Activated CD4-positive, alpha-beta memory T cell treated with anti-CD3 and anti-CD28 coated beads, Interleukin-2, amount 10 ng/mL, durations not matched to agents 7 days and 5 days (primary cell): ENCODE measurements at regions of chr12 and their contacts with region 1.

Region 1: DNA sequence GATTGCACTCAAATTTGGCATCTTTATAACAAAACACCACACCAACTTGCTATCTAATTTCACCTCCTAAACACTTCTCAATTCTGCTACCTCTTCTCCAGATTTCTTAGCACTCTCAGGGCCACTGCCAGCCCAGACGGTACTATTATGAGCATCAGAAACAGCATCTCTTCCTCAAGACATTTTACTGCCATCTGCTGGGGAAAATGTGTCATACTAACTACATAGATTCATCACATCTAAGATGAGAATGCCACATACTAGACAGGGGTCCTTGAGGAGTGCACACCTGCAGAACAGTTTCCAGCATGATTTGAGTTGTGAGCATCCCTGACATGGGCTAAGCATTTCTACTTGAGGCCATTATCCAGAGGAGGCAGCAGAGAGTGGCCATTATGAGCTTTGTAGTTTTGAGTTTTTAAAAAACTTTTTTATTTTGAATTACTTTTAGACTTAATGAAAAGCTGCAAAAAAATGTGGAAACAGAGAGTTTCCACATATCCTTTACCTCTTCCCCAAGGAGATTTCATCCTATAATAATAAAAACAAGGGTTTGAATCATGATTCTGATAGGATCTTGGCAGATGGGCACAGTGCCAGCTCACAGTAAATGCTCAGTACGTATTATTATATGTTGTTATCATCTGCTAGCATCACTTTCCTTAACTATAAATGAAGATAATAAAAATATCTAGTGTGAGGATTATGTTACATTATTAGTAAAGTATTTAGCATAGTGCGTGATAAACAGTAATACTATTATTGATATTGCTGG is 15.2 kb upstream of the GRIP1 start:
- DNase-seq: no peak
- H3K4me3 Mint-ChIP-seq: no peak overlapping the region
- H3K27ac Mint-ChIP-seq: no peak overlapping the region
- H3K4me1 Mint-ChIP-seq: no peaks in the 10 kb centered on the region
- H3K27me3 Mint-ChIP-seq: peaks cover 22% of the 10 kb centered on the region

Region 2: GRCh38 chr12:66269757-66270383 is 424.2 kb before region 1 on chr12:
- CTCF ChIA-PET with region 1: interaction called, 10 read pairs
- POLR2A ChIA-PET with region 1: no interaction called
- DNase-seq: peak; percentile 29
- H3K4me3 Mint-ChIP-seq: no peak overlapping the region
- H3K27ac Mint-ChIP-seq: no peak overlapping the region
- H3K4me1 Mint-ChIP-seq: peaks cover 6% of the 10 kb centered on the region
- H3K27me3 Mint-ChIP-seq: no peaks in the 10 kb centered on the region